Activated CD8-positive, alpha-beta T cell treated with anti-CD3 and anti-CD28 coated beads, Interleukin-2, amount 10 ng/mL, durations not matched to agents 7 days and 5 days (primary cell): ENCODE measurements at regions of chr4 and their contacts with region 1.

Region 1: GRCh38 chr4:40897557-40898203 is 147.9 kb downstream of the NSUN7 start:
- DNase-seq: peak; percentile 70
- ATAC-seq: peak; percentile 76
- H3K4me3 Mint-ChIP-seq: peak overlapping the region; percentile 58
- H3K27ac Mint-ChIP-seq: peak overlapping the region; percentile 54
- H3K4me1 Mint-ChIP-seq: peaks cover 9% of the 10 kb centered on the region
- H3K27me3 Mint-ChIP-seq: peaks cover 2% of the 10 kb centered on the region

Region 2: GRCh38 chr4:40736910-40737309 is 160.8 kb before region 1 on chr4:
- CTCF ChIA-PET with region 1: interaction called, 20 read pairs
- POLR2A ChIA-PET with region 1: no interaction called
- DNase-seq: no peak
- ATAC-seq: no peak
- H3K4me3 Mint-ChIP-seq: no peak overlapping the region
- H3K27ac Mint-ChIP-seq: no peak overlapping the region
- H3K4me1 Mint-ChIP-seq: peaks cover 25% of the 10 kb centered on the region
- H3K27me3 Mint-ChIP-seq: peaks cover 11% of the 10 kb centered on the region

Region 3: DNA sequence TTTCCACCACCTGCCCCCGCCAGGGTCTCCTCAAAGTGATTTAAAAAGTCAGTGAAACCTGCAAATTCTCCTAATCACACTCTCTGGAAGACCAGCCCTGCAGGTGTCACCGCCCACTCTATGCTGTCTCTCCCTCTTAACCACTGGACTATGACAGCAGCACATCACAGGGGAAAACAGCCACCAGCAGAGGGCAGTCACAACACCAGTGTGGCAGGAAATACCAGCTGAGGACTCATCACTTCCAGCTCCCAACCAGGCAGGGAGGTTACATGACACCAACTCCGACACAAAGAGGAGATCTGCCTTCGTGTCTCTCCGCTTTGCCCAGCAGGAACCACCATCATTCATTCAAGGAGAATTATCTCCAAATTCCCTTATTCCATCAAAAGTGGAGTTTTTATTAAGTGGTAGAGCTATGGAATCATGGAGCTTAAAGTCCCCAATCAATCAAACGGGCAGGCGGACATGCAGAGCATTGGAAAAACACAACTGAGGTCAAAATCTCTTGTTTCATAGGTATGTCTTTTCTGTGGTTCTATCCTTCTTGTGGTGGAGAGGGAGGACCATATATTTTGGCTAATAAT is 56.6 kb before region 1 on chr4:
- CTCF ChIA-PET with region 1: interaction called, 16 read pairs
- POLR2A ChIA-PET with region 1: no interaction called
- DNase-seq: peak; percentile 85
- ATAC-seq: peak; percentile 92
- H3K4me3 Mint-ChIP-seq: no peak overlapping the region
- H3K27ac Mint-ChIP-seq: no peak overlapping the region
- H3K4me1 Mint-ChIP-seq: peaks cover 3% of the 10 kb centered on the region
- H3K27me3 Mint-ChIP-seq: peaks cover 8% of the 10 kb centered on the region

Region 4: GRCh38 chr4:40881851-40882250 is 15.8 kb before region 1 on chr4:
- CTCF ChIA-PET with region 1: interaction called, 16 read pairs
- POLR2A ChIA-PET with region 1: no interaction called
- DNase-seq: no peak
- ATAC-seq: no peak
- H3K4me3 Mint-ChIP-seq: no peak overlapping the region
- H3K27ac Mint-ChIP-seq: no peak overlapping the region
- H3K4me1 Mint-ChIP-seq: no peaks in the 10 kb centered on the region
- H3K27me3 Mint-ChIP-seq: peaks cover 29% of the 10 kb centered on the region

Region 5: GRCh38 chr4:40887288-40888131 is 10.2 kb before region 1 on chr4:
- CTCF ChIA-PET with region 1: interaction called, 17 read pairs
- POLR2A ChIA-PET with region 1: no interaction called
- DNase-seq: no peak
- ATAC-seq: no peak
- H3K4me3 Mint-ChIP-seq: no peak overlapping the region
- H3K27ac Mint-ChIP-seq: no peak overlapping the region
- H3K4me1 Mint-ChIP-seq: peaks cover 19% of the 10 kb centered on the region
- H3K27me3 Mint-ChIP-seq: peaks cover 16% of the 10 kb centered on the region

Region 6: GRCh38 chr4:40908702-40909362 is 11.2 kb after region 1 on chr4:
- CTCF ChIA-PET with region 1: interaction called, 29 read pairs
- POLR2A ChIA-PET with region 1: no interaction called
- DNase-seq: peak; percentile 81
- ATAC-seq: peak; percentile 87
- H3K4me3 Mint-ChIP-seq: no peak overlapping the region
- H3K27ac Mint-ChIP-seq: no peak overlapping the region
- H3K4me1 Mint-ChIP-seq: peaks cover 14% of the 10 kb centered on the region
- H3K27me3 Mint-ChIP-seq: no peaks in the 10 kb centered on the region

Region 7: GRCh38 chr4:40924096-40924792 is 26.6 kb after region 1 on chr4:
- CTCF ChIA-PET with region 1: interaction called, 23 read pairs
- POLR2A ChIA-PET with region 1: no interaction called
- DNase-seq: peak; percentile 81
- ATAC-seq: peak; percentile 86
- H3K4me3 Mint-ChIP-seq: no peak overlapping the region
- H3K27ac Mint-ChIP-seq: peak overlapping the region; percentile 70
- H3K4me1 Mint-ChIP-seq: peaks cover 5% of the 10 kb centered on the region
- H3K27me3 Mint-ChIP-seq: peaks cover 7% of the 10 kb centered on the region